ENCODE measurements at regions of chr11 and their contacts with region 1.

Region 1: DNA sequence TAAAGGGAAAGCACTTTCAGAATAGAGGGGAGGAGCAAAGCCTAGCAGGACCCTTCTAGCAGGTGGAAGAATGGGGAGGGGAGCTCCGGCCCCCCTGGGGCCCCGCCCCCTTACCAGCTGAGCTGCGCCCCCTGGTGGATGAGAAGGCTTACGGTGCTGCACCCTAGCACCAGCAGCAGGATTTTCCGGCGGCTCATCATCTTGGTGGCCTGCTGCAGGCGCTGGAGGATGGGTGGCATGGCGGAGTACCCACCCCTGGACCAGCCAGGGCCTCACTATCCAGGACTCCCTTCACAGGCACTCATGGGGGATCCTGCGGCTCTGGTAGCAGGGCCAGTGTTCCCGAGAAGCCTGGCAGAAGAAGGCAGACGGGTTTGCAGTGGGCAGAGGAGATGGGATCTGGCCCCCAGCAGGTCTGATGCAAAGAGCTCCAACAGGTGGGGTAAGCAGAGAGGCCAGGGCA is 3.8 kb downstream of the GAL3ST3 start:
- DNase-seq: peak; percentile 88
- H3K4me3 Mint-ChIP-seq: peak overlapping the region; percentile 12
- H3K27ac Mint-ChIP-seq: peak overlapping the region; percentile 42
- H3K4me1 Mint-ChIP-seq: peaks cover 19% of the 10 kb centered on the region
- H3K27me3 Mint-ChIP-seq: peaks cover 7% of the 10 kb centered on the region

Region 2: DNA sequence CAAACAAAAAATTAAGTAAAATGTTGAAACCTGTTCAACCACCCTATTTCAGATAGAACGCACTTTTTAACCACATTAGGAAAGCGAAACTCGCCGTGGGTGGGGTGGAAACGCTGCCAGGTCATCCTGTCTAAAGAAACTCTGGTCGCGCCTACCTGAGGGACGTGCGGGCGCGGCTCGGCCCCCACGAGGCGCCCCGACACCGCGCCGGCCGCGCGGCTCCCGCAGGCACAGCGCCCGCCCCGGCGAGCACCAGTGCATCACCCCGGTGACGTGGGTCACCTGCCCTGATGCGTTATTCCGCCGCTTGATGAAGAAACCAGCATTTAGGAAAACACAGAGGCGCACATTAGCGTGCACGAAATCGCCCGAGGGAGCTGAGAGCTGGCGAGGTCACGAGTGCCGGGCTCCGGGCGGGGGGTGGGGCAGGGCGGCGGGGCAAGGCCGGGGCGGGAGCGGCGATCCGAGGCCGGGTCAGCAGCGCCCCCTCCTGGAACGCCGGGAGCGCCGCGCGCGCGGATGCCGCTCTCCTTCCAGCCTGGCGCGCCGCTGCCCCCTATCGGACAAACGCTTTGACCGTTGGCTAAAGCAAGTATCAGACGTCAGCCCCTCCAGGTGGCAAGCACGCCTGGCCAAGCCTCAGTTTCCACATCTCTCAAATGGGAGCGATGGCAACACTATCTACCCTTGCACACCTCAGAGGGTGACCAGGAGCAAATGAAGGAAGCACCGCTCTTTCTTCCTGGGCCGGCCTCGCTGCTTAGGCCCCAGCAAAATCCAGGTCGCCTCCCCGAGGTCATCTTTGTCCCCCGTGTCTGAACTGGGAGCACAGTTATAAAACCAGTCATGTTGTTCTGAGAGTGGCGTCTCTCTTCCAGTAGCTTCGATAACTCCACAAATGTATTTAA is 227.1 kb before region 1 on chr11:
- CTCF ChIA-PET with region 1: no interaction called
- intact Hi-C with region 1: no loop called
- DNase-seq: peak; percentile 96
- H3K4me3 Mint-ChIP-seq: peak overlapping the region; percentile 72
- H3K27ac Mint-ChIP-seq: peak overlapping the region; percentile 50
- H3K4me1 Mint-ChIP-seq: peaks cover 6% of the 10 kb centered on the region
- H3K27me3 Mint-ChIP-seq: no peaks in the 10 kb centered on the region

Region 3: GRCh38 chr11:66059966-66060680 is 14.9 kb after region 1 on chr11:
- CTCF ChIA-PET with region 1: interaction called, 37 read pairs
- intact Hi-C with region 1: no loop called
- DNase-seq: no peak
- H3K4me3 Mint-ChIP-seq: no peak overlapping the region
- H3K27ac Mint-ChIP-seq: peak overlapping the region; percentile 82
- H3K4me1 Mint-ChIP-seq: peaks cover 58% of the 10 kb centered on the region
- H3K27me3 Mint-ChIP-seq: no peaks in the 10 kb centered on the region

Region 4: DNA sequence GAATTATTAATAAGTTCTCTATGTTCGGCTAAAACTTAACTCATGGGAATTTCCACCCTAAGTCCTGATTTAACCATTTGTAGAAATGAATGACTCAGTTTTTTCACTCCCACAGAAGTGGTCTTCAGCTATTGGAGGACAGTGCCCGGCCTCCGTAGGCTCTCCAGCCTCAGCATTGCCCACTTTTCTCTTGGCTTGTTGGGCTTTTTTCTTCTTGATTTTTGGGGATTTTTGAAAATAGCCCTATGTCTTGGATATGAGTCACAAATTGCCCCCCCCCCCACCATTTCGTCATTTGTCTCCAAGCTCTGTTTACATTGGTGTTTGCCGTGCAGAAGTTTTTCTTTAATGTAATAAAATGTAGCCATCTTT is 91.5 kb after region 1 on chr11:
- CTCF ChIA-PET with region 1: interaction called, 10 read pairs
- intact Hi-C with region 1: no loop called
- DNase-seq: peak; percentile 47
- H3K4me3 Mint-ChIP-seq: no peak overlapping the region
- H3K27ac Mint-ChIP-seq: peak overlapping the region; percentile 66
- H3K4me1 Mint-ChIP-seq: peaks cover 66% of the 10 kb centered on the region
- H3K27me3 Mint-ChIP-seq: no peaks in the 10 kb centered on the region

Measured in activated naive CD4-positive, alpha-beta T cell treated with anti-CD3 and anti-CD28 coated beads for 36 hours (primary cell).